HepG2 (cell line): ENCODE measurements at regions of chr10 and their contacts with region 1.

Region 1: DNA sequence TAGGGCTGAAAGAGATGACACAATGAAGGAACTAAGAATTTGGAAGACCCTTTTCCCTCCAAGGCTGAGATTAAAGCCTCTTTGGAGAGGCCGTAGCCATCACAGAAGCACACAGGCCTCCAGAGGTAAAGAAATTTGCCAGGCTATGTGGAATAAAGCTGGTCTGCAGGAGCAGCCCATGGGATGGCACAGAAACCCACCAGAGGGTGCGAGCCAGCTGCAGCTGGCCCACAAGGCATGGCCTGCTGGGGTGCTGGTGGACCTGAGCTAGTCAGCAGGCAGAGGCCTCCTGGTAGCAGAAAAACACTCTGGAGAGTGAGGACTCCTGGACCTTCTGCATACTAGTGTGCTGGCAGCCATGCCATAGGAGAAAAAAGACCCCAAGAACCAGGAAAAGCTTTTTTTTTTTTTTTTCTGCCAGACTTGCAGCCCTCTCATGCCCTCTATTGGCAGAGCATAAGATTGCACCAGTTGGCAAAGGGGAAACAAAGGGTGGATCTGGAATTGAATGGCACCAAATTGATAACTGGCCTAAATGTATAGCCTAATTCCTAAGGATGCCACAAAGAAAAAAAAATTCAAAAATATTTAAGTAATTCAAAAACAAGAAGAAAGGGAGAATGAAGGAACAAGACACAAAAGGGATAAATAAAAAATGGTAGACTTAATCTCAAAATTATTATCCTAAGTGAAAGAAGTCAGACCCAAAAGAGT is 112.6 kb upstream of the GHITM start:
- DNase-seq: peak; percentile 10
- ATAC-seq: peak; percentile 44; the same call in 2 of the 3 replicates
- H3K4me3 ChIP-seq: no peak overlapping the region
- H3K27ac ChIP-seq: no peak overlapping the region
- H3K4me1 ChIP-seq: no peaks in the 10 kb centered on the region
- H3K27me3 ChIP-seq: no peaks in the 10 kb centered on the region; a peak in 1 of 5 replicates
- CTCF ChIP-seq: peak; percentile 64
- EP300 ChIP-seq: no peak
- POLR2A ChIP-seq: no peak
- RAD21 ChIP-seq: no peak

Region 2: DNA sequence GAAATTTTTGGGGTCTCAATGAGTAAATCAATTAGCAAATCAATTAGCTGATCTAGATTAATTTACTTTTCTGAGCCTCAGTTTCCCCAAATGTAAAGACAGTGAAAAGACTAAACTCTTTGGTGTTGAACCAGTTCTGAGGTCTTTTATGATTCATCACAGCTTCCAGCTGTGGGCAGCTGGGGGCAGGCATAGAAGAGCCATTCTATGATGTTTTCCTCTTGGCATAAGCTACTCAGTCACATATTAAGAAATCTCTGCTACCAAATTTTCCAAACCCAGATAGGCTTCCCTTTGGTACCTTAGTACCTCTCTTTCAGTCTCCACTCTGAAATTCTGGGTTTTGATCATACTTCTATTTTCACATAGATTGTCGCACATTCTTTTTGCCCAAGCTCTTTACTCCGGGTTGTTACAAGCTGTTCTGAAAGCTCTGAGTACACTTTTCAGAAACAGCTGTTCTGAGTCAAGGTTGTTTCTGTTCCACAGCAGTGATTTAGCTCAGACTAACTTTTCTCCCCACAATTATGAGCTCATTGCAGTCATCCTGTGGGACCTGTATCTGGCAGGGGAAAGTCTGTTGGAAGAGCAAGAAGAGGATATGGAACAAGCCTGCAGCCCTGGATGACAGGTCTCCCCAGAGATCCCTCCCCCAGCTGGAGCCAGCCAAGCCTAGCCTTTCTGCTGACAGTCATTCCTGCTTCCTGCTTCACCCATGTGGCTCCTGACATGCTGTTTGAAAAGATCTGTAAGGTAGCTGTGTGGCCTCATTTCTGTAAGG is 487.0 kb before region 1 on chr10:
- CTCF ChIA-PET with region 1: no interaction called
- POLR2A ChIA-PET with region 1: no interaction called
- in situ Hi-C with region 1: no loop called
- intact Hi-C with region 1: no loop called
- DNase-seq: no peak
- ATAC-seq: no peak
- H3K4me3 ChIP-seq: no peak overlapping the region
- H3K27ac ChIP-seq: no peak overlapping the region
- H3K4me1 ChIP-seq: no peaks in the 10 kb centered on the region
- H3K27me3 ChIP-seq: no peaks in the 10 kb centered on the region
- CTCF ChIP-seq: no peak
- EP300 ChIP-seq: no peak
- POLR2A ChIP-seq: no peak
- RAD21 ChIP-seq: no peak

Region 3: DNA sequence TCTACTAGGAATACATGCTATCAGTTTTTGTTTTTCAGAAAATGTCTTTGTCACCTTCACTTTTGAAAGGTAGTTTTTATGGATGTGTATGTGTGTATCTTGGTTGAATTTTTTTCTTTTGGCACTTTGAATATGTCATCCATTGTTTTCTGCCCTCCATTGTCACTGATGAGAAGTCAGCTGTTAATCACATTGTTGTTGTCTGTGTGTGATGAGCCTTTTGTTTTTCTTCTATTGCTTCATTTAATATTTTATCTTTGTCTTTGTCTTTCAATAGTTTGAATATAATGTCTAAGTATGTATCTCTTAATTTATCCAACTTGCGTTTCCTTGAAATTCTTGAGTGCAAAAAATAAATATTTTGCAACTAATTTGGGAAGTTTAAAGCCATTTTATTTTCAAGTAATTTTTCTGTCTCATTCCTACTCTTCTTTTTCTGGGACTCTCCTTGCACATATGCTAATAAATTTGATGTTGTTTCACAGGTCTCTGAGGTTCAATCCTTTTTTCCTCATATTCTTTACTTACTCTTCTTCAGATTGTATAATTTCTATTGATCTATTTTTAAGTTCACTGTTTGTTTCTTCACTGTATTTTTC is 434.3 kb before region 1 on chr10:
- CTCF ChIA-PET with region 1: no interaction called
- POLR2A ChIA-PET with region 1: no interaction called
- in situ Hi-C with region 1: no loop called
- intact Hi-C with region 1: no loop called
- DNase-seq: no peak
- ATAC-seq: no peak
- H3K4me3 ChIP-seq: no peak overlapping the region
- H3K27ac ChIP-seq: no peak overlapping the region
- H3K4me1 ChIP-seq: no peaks in the 10 kb centered on the region
- H3K27me3 ChIP-seq: no peaks in the 10 kb centered on the region
- CTCF ChIP-seq: no peak
- EP300 ChIP-seq: no peak
- POLR2A ChIP-seq: no peak
- RAD21 ChIP-seq: no peak

Region 4: GRCh38 chr10:83801983-83802382 is 224.7 kb before region 1 on chr10:
- CTCF ChIA-PET with region 1: no interaction called
- POLR2A ChIA-PET with region 1: no interaction called
- in situ Hi-C with region 1: no loop called
- intact Hi-C with region 1: loop called (anchors 10 kb)
- DNase-seq: no peak
- ATAC-seq: no peak
- H3K4me3 ChIP-seq: no peak overlapping the region
- H3K27ac ChIP-seq: no peak overlapping the region
- H3K4me1 ChIP-seq: no peaks in the 10 kb centered on the region
- H3K27me3 ChIP-seq: no peaks in the 10 kb centered on the region
- CTCF ChIP-seq: no peak
- EP300 ChIP-seq: no peak
- POLR2A ChIP-seq: no peak
- RAD21 ChIP-seq: no peak

Region 5: GRCh38 chr10:84047258-84048010 is 20.7 kb after region 1 on chr10:
- CTCF ChIA-PET with region 1: no interaction called
- POLR2A ChIA-PET with region 1: no interaction called
- in situ Hi-C with region 1: no loop called
- intact Hi-C with region 1: no loop called
- DNase-seq: no peak
- ATAC-seq: no peak
- H3K4me3 ChIP-seq: no peak overlapping the region
- H3K27ac ChIP-seq: no peak overlapping the region
- H3K4me1 ChIP-seq: no peaks in the 10 kb centered on the region
- H3K27me3 ChIP-seq: 0 out of 5 replicates have a peak, but pooled peaks cover 0 to 4% of the 10 kb centered on the region in 2 experiments
- CTCF ChIP-seq: no peak
- EP300 ChIP-seq: no peak
- POLR2A ChIP-seq: no peak
- RAD21 ChIP-seq: no peak